Body of pancreas (tissue), 4 donors: ENCODE measurements at regions of chr13 and their contacts with region 1.

Region 1: DNA sequence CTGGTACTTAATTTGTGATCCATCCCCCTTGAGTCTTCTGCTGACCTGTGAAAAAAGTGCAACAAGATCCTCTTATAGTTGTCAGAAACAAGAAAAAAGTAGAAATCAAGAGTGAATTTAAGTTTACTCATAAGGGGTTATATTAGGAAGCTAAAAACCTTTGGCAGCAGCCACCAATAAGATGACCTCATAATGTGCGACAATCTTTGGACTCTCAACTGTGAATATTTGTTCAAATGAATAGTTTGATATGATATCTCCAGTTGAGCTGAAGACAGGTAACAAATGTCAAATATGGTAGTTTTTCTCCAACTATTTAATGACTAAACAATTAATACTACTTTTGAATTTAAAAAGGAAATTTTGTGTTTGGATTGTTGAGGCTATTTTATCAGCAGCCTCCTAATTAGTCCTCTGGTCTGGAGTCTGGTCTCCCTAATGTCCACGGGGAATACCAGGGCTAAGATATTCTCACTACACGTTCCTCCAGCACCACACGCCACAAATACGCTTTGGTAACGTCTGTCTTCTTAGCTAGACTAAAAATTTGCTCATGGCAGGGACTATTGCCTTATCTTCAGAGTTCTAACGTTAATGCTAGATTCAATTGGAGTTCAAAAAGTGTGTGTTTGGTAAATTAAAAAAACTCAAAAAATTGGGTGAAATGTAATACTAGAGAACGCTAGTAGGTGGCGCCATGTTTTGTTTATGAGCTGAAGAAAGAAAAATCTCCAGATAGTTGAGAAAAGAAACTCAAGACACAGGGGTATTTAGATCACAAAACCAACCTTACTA is 51.0 kb upstream of the PDX1 start:
- DNase-seq: peak in 2 of 4 donors; percentile 34 to 54
- ATAC-seq: peak; percentile 85
- H3K4me3 ChIP-seq: no peak overlapping the region
- H3K27ac ChIP-seq: peak overlapping the region in 3 of 4 donors; percentile 54 to 71 (median 66)
- H3K4me1 ChIP-seq: peaks cover 26% of the 10 kb centered on the region
- H3K27me3 ChIP-seq: no peaks in the 10 kb centered on the region
- CTCF ChIP-seq: peak; percentile 38 to 87 (median 66)
- POLR2A ChIP-seq: peak in 1 of 3 donors; percentile 4

Region 2: GRCh38 chr13:27953676-27954405 is 85.0 kb after region 1 on chr13:
- intact Hi-C with region 1: loop called (anchors 10 kb)
- DNase-seq: peak; percentile 87 to 90 (median 90)
- ATAC-seq: peak; percentile 89
- H3K4me3 ChIP-seq: peak overlapping the region; percentile 31 to 40
- H3K27ac ChIP-seq: peak overlapping the region; percentile 97 to 99 (median 98)
- H3K4me1 ChIP-seq: peaks cover 56% of the 10 kb centered on the region
- H3K27me3 ChIP-seq: no peaks in the 10 kb centered on the region
- CTCF ChIP-seq: peak; percentile 84 to 99 (median 95)
- POLR2A ChIP-seq: peak; percentile 51 to 67 (median 56)